B cell (primary cell): ENCODE measurements at regions of chr15 and their contacts with region 1.

Region 1: GRCh38 chr15:101258238-101259144 is 6.6 kb upstream of the CHSY1 start:
- DNase-seq: peak; percentile 75
- ATAC-seq: peak; percentile 64
- H3K4me3 ChIP-seq: no peak overlapping the region
- H3K4me3 Mint-ChIP-seq: no peak overlapping the region
- H3K27ac ChIP-seq: no peak overlapping the region
- H3K27ac Mint-ChIP-seq: no peak overlapping the region
- H3K4me1 ChIP-seq: no peaks in the 10 kb centered on the region
- H3K4me1 Mint-ChIP-seq: no peaks in the 10 kb centered on the region
- H3K27me3 ChIP-seq: peaks cover 0 to 14% (median 3%) of the 10 kb centered on the region in 4 experiments
- H3K27me3 Mint-ChIP-seq: peaks cover 9% of the 10 kb centered on the region
- CTCF ChIP-seq: peak; percentile 91

Region 2: DNA sequence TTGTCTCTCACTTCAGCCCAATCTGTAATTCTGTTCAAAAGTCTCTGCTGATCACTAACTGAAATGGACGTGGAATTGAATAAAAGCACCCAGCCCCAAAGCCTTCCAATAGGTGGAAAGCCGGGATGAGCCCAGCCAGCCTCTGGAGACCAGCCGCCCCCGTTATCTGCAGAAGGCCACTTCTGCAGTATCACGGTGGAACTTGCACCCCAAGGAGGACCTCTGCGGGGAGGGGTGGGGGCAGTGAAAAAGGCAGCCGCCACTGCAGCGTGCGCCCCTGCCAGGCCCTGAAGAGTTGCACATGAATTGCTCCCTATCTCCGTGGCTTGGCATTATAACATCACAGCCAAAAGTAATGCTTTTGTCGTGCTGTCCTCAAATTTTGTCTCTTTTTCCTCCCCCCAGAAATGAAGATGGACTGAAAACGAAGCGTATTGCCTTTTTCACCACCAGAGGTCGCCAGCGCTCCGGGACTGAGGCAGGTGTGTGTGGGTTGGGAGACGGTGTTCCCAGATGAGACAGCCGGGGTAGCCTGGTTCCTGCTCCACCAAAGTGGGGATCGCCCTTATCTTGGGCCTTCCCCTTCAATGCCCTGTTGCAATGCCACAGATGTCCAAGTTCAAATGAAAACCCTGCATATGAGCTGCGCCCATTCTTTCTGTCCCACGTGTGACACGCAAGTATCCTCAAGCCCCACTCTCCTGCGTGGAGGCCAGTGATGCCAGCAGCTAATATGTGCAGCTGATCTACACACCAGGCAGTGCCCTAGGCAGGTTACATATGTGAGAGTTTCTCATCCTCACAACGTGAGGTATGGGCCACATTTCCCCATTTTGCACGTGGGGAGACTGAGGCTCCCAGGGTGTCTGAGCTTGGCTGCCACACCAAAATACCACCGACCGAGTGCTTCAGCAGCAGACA is 243.3 kb before region 1 on chr15:
- CTCF ChIA-PET with region 1: interaction called, 133 read pairs
- POLR2A ChIA-PET with region 1: no interaction called
- intact Hi-C with region 1: no loop called
- DNase-seq: peak; percentile 73
- ATAC-seq: peak; percentile 65
- H3K4me3 ChIP-seq: no peak overlapping the region
- H3K4me3 Mint-ChIP-seq: no peak overlapping the region
- H3K27ac ChIP-seq: no peak overlapping the region
- H3K27ac Mint-ChIP-seq: no peak overlapping the region
- H3K4me1 ChIP-seq: no peaks in the 10 kb centered on the region
- H3K4me1 Mint-ChIP-seq: no peaks in the 10 kb centered on the region
- H3K27me3 ChIP-seq: no peaks in the 10 kb centered on the region
- H3K27me3 Mint-ChIP-seq: no peaks in the 10 kb centered on the region
- CTCF ChIP-seq: peak; percentile 83

Region 3: GRCh38 chr15:101105059-101105891 is 153.2 kb before region 1 on chr15:
- CTCF ChIA-PET with region 1: interaction called, 11 read pairs
- POLR2A ChIA-PET with region 1: no interaction called
- intact Hi-C with region 1: no loop called
- DNase-seq: no peak
- ATAC-seq: no peak
- H3K4me3 ChIP-seq: no peak overlapping the region
- H3K4me3 Mint-ChIP-seq: no peak overlapping the region
- H3K27ac ChIP-seq: no peak overlapping the region
- H3K27ac Mint-ChIP-seq: no peak overlapping the region
- H3K4me1 ChIP-seq: no peaks in the 10 kb centered on the region
- H3K4me1 Mint-ChIP-seq: no peaks in the 10 kb centered on the region
- H3K27me3 ChIP-seq: no peaks in the 10 kb centered on the region
- H3K27me3 Mint-ChIP-seq: no peaks in the 10 kb centered on the region
- CTCF ChIP-seq: no peak

Region 4: GRCh38 chr15:101121511-101122090 is 136.9 kb before region 1 on chr15:
- CTCF ChIA-PET with region 1: interaction called, 11 read pairs
- POLR2A ChIA-PET with region 1: no interaction called
- intact Hi-C with region 1: loop called (anchors 1 kb)
- DNase-seq: peak; percentile 66
- ATAC-seq: peak; percentile 78
- H3K4me3 ChIP-seq: peak overlapping the region in 4 of 5 experiments; percentile 47 to 58 (median 52)
- H3K4me3 Mint-ChIP-seq: peak overlapping the region; percentile 54
- H3K27ac ChIP-seq: no peak overlapping the region
- H3K27ac Mint-ChIP-seq: peak overlapping the region; percentile 46
- H3K4me1 ChIP-seq: peaks cover 36 to 39% of the 10 kb centered on the region in 2 donors
- H3K4me1 Mint-ChIP-seq: peaks cover 40% of the 10 kb centered on the region
- H3K27me3 ChIP-seq: no peaks in the 10 kb centered on the region
- H3K27me3 Mint-ChIP-seq: no peaks in the 10 kb centered on the region
- CTCF ChIP-seq: peak; percentile 24

Region 5: GRCh38 chr15:101242160-101242998 is 16.1 kb before region 1 on chr15:
- CTCF ChIA-PET with region 1: interaction called, 33 read pairs
- POLR2A ChIA-PET with region 1: no interaction called
- intact Hi-C with region 1: no loop called
- DNase-seq: peak; percentile 82
- ATAC-seq: peak; percentile 83
- H3K4me3 ChIP-seq: peak overlapping the region; percentile 3 to 41 (median 16)
- H3K4me3 Mint-ChIP-seq: peak overlapping the region; percentile 66
- H3K27ac ChIP-seq: peak overlapping the region in 1 of 2 donors; percentile 46
- H3K27ac Mint-ChIP-seq: peak overlapping the region; percentile 73
- H3K4me1 ChIP-seq: peaks cover 74% of the 10 kb centered on the region in 2 donors
- H3K4me1 Mint-ChIP-seq: peaks cover 84% of the 10 kb centered on the region
- H3K27me3 ChIP-seq: no peaks in the 10 kb centered on the region
- H3K27me3 Mint-ChIP-seq: no peaks in the 10 kb centered on the region
- CTCF ChIP-seq: no peak